ENCODE measurements at regions of chr17 and their contacts with region 1.

Region 1: GRCh38 chr17:65953316-65954311 is 238.3 kb downstream of the CEP112 start:
- DNase-seq: no peak
- H3K4me3 ChIP-seq: no peak overlapping the region
- H3K27ac ChIP-seq: no peak overlapping the region
- H3K4me1 ChIP-seq: no peaks in the 10 kb centered on the region
- H3K27me3 ChIP-seq: no peaks in the 10 kb centered on the region
- CTCF ChIP-seq: no peak

Region 2: GRCh38 chr17:65865715-65866425 is 87.7 kb before region 1 on chr17:
- CTCF ChIA-PET with region 1: no interaction called
- dilution Hi-C with region 1: no loop called
- in situ Hi-C with region 1: no loop called
- intact Hi-C with region 1: no loop called
- DNase-seq: no peak
- H3K4me3 ChIP-seq: no peak overlapping the region
- H3K27ac ChIP-seq: no peak overlapping the region
- H3K4me1 ChIP-seq: no peaks in the 10 kb centered on the region
- H3K27me3 ChIP-seq: no peaks in the 10 kb centered on the region
- CTCF ChIP-seq: no peak

Region 3: GRCh38 chr17:65892912-65893377 is 60.7 kb before region 1 on chr17:
- CTCF ChIA-PET with region 1: no interaction called
- dilution Hi-C with region 1: loop called (anchors 10 kb)
- in situ Hi-C with region 1: no loop called
- intact Hi-C with region 1: no loop called
- DNase-seq: no peak
- H3K4me3 ChIP-seq: no peak overlapping the region
- H3K27ac ChIP-seq: no peak overlapping the region
- H3K4me1 ChIP-seq: no peaks in the 10 kb centered on the region
- H3K27me3 ChIP-seq: no peaks in the 10 kb centered on the region
- CTCF ChIP-seq: no peak

Region 4: DNA sequence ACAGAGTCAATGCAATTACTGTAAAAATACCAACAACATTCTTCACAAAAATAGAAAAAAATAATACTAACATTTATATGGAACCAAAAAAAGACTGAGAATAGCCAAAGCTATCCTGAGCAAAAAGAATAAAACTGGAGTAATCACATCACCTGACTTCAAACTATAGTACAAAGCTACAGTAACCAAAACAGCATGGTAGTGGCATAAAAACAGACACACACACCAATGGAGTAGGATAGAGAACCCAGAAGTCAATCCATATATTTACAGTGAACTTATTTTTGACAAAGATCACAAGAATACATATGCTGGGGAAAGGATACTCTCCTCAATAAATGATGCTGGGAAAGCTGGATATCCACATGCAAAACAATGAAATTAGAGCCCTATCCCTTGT is 154.1 kb after region 1 on chr17:
- CTCF ChIA-PET with region 1: no interaction called
- dilution Hi-C with region 1: no loop called
- in situ Hi-C with region 1: no loop called
- intact Hi-C with region 1: no loop called
- DNase-seq: no peak
- H3K4me3 ChIP-seq: no peak overlapping the region
- H3K27ac ChIP-seq: no peak overlapping the region
- H3K4me1 ChIP-seq: no peaks in the 10 kb centered on the region
- H3K27me3 ChIP-seq: no peaks in the 10 kb centered on the region
- CTCF ChIP-seq: no peak